K562 (cell line): ENCODE measurements at regions of chr12 and their contacts with region 1.

Region 1: DNA sequence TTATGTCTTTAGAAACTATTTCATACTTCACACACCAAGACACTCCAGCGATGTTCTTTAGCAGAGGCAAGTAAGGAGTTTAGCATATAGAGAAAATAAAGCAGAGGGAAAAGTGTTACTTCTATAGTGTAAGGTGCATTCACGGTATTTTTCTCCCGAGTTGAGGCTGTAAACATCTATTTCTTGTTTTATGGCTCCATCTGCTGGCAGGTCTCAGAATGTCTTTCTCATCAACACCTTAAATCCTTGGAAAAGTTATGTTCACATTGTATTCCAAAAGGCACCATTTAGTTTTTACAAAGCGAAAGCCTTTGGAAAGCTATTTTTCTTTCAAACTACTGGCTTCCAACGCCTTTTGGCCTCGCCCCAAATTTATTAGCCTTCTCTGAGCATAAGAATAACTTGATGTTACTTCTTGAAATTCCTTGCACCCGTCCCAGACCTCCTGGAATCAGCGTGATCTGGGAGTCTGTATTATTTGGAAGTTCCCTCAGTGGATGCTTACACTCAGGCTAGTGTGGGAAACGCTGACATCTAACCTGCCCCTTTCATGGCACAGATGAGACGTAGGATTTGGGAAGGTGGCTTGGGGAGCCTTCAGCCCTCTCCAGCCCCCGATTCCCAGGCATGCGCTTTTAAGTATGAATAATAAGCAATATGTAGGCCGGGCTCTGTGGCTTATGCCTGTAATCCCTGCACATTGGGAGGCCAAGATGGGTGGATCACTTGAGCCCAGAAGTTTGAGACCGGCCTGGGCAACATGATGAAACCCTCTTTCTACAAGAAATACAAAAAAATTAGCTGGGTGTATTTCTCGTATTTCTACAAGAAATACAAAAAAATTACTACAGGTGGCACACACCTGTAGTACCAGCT is 1.9 kb upstream of the PIWIL1 start:
- DNase-seq: peak; percentile 41 to 71 (median 47)
- ATAC-seq: peak; percentile 82
- H3K4me3 ChIP-seq: no peak overlapping the region
- H3K27ac ChIP-seq: no peak overlapping the region
- H3K4me1 ChIP-seq: peaks cover 0 to 3% of the 10 kb centered on the region in 2 experiments; a peak in 2 of 5 replicates
- H3K27me3 ChIP-seq: peaks cover 2 to 25% of the 10 kb centered on the region in 2 experiments; a peak in 2 of 5 replicates
- CTCF ChIP-seq: peak; percentile 54 to 78 (median 73); a peak in 5 of 6 replicates
- EP300 ChIP-seq: no peak
- POLR2A ChIP-seq: no peak
- RAD21 ChIP-seq: peak; percentile 63 to 84

Region 2: GRCh38 chr12:130031571-130032189 is 304.1 kb before region 1 on chr12:
- CTCF ChIA-PET with region 1: no interaction called
- POLR2A ChIA-PET with region 1: no interaction called
- in situ Hi-C with region 1: no loop called
- intact Hi-C with region 1: loop called (anchors 5 kb)
- DNase-seq: peak; percentile 71 to 91 (median 80)
- ATAC-seq: peak; percentile 92
- H3K4me3 ChIP-seq: no peak overlapping the region
- H3K27ac ChIP-seq: no peak overlapping the region
- H3K4me1 ChIP-seq: no peaks in the 10 kb centered on the region
- H3K27me3 ChIP-seq: peaks cover 0 to 22% of the 10 kb centered on the region in 2 experiments; a peak in 4 of 5 replicates
- CTCF ChIP-seq: peak; percentile 98 to 100 (median 100)
- EP300 ChIP-seq: no peak
- POLR2A ChIP-seq: no peak
- RAD21 ChIP-seq: peak in 1 of 2 experiments; percentile 49; a peak in 2 of 4 replicates

Region 3: GRCh38 chr12:130041983-130042812 is 293.6 kb before region 1 on chr12:
- CTCF ChIA-PET with region 1: interaction called, 14 read pairs
- POLR2A ChIA-PET with region 1: no interaction called
- in situ Hi-C with region 1: loop called (anchors 5 kb)
- intact Hi-C with region 1: loop called (anchors 5 kb)
- DNase-seq: peak; percentile 29 to 64 (median 58)
- ATAC-seq: peak; percentile 86
- H3K4me3 ChIP-seq: no peak overlapping the region
- H3K27ac ChIP-seq: no peak overlapping the region
- H3K4me1 ChIP-seq: no peaks in the 10 kb centered on the region
- H3K27me3 ChIP-seq: peaks cover 0 to 5% of the 10 kb centered on the region in 2 experiments; a peak in 2 of 5 replicates
- CTCF ChIP-seq: peak; percentile 48 to 62 (median 56)
- EP300 ChIP-seq: no peak
- POLR2A ChIP-seq: no peak
- RAD21 ChIP-seq: no peak; a peak in 1 of 4 replicates

Region 4: DNA sequence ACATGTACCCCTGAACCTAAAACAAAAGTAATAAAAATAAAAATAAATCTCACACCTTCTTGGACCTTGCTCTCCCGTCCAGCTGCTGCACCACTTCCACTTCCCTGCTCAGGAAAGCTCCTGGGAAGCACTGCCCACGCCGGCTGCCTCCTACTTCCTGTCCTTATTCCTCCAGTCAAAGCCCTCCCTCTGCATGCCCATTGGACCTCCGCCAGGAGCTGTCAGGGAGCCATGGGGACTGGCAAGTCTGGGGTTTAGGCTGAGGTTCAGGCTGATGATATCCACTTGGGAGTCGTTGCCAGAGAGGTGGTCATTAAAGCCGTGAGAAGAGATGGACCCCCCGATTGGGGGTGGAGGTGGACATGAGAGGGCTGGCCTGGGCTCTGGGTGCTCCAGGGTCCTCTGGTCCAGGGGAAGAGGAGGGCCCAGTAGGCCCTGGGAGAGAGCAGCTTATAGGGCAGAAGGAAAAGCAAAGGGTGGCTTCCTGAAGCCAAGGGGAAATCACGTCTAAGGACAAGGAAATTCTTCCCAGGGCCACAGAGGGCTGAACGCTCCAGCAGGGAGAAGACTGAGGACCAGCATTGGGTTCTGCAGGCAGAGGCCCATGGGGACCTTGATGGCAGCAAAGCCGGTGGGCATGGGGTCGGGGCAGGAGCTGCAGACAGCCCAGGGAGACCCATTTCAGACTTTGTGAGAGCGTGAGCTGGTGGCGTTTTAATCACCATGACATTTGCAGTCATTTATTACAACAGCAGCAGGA is 94.7 kb before region 1 on chr12:
- CTCF ChIA-PET with region 1: no interaction called
- POLR2A ChIA-PET with region 1: no interaction called
- in situ Hi-C with region 1: no loop called
- intact Hi-C with region 1: no loop called
- DNase-seq: no peak
- ATAC-seq: no peak
- H3K4me3 ChIP-seq: no peak overlapping the region
- H3K27ac ChIP-seq: no peak overlapping the region
- H3K4me1 ChIP-seq: no peaks in the 10 kb centered on the region
- H3K27me3 ChIP-seq: no peaks in the 10 kb centered on the region
- CTCF ChIP-seq: no peak
- EP300 ChIP-seq: no peak
- POLR2A ChIP-seq: no peak
- RAD21 ChIP-seq: no peak

Region 5: DNA sequence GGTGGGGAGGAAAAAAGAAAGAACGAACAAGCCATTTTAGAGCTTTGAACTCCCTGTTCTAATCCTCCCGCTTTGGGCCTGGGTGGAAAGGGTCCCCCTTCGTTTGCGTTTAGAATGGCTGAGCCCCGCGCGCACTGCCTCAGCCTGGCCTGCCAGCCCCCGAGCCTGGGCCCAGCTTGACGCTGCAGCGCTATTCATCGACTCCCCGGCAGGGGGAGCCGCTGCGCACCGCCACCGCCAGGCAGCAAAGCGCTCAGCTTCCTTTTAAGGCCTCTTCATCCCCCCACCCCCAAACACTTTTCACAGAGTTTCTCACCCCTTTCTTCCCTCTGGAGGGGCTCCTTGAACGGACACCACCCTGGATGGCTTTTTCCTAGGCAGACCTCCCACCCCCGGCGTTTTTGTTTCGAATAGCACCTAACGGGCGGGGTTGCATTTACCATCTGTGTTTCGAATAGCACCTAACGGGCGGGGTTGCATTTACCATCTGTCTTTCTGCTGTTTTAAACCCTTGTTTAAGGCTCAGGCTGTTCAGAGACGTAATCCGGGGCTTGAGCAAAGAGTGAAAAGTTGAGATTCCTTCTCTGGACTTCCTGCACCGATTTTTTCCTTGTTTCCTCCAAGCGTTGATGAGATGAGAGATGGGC is 54.5 kb before region 1 on chr12:
- CTCF ChIA-PET with region 1: no interaction called
- POLR2A ChIA-PET with region 1: no interaction called
- in situ Hi-C with region 1: no loop called
- intact Hi-C with region 1: loop called (anchors 1 kb)
- DNase-seq: peak; percentile 50 to 67 (median 66)
- ATAC-seq: peak; percentile 96
- H3K4me3 ChIP-seq: no peak overlapping the region
- H3K27ac ChIP-seq: no peak overlapping the region
- H3K4me1 ChIP-seq: no peaks in the 10 kb centered on the region; a peak in 1 of 5 replicates
- H3K27me3 ChIP-seq: no peaks in the 10 kb centered on the region; a peak in 1 of 5 replicates
- CTCF ChIP-seq: peak; percentile 70 to 88 (median 83)
- EP300 ChIP-seq: no peak
- POLR2A ChIP-seq: no peak
- RAD21 ChIP-seq: peak in 1 of 2 experiments; percentile 36; a peak in 2 of 4 replicates